B cell (primary cell): ENCODE measurements at regions of chr14 and their contacts with region 1.

Region 1: DNA sequence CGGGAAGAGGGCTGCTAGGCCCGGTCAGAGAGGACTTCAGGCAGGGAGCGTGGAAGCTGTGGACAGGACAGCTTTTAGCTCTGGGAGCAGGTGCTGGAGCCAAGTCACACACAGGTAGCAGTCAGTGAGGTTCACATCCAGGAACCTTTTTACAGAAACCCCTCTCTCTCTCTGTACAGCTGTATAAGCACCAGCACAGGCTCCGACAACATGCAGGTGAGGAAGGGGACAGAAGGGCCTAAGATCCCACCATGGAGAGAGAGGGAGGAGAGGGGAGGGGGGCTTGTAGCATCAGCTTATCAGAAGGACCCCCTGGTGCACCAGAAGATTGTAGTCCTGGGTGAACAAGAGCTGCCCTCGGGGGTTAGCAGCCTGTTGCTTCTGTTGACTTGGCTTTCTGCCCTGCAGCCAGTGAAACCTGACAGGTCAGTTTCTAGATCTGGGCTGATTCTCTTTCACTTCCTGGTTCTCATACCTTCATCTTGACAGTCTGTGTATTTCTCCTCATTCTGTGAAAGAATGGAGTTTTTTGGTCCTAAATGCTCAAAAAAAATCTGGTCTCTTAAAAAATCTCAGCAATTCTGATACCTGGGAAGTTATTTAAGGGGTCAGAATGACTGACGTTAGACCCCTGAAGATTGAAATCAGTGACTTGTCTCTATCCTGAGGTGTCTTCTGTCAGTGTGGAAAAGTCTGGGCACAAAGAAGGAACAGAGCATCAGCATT is 23.6 kb downstream of the TTC9 start:
- DNase-seq: peak; percentile 75
- ATAC-seq: peak; percentile 61
- H3K4me3 ChIP-seq: peak overlapping the region in 3 of 5 experiments; percentile 13 to 41 (median 16)
- H3K4me3 Mint-ChIP-seq: peak overlapping the region; percentile 65
- H3K27ac ChIP-seq: peak overlapping the region; percentile 79 to 89
- H3K27ac Mint-ChIP-seq: peak overlapping the region; percentile 89
- H3K4me1 ChIP-seq: peaks cover 94 to 100% of the 10 kb centered on the region in 2 donors
- H3K4me1 Mint-ChIP-seq: peaks cover 97% of the 10 kb centered on the region
- H3K27me3 ChIP-seq: no peaks in the 10 kb centered on the region
- H3K27me3 Mint-ChIP-seq: no peaks in the 10 kb centered on the region
- CTCF ChIP-seq: no peak

Region 2: DNA sequence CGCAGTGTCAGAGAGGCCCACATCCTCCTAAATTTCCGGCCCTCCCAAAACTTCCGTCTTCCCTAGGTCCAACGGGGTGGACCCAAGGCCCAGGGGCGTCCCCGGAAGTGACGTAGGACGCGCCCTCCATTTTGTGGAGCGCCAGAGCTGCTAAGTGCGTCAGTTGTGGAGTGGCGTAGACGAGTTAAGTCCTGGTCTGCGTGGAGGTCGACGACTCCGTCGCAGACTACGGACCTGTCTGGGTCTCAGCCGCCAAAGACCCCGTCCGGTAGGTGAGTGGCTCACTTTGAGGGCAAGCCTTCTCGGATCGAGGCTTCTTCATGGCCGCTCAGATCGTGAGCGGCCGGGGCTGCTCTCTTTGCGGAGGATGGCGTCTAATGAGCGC is 898.4 kb before region 1 on chr14 and contains the start of gene SRSF5:
- CTCF ChIA-PET with region 1: no interaction called
- POLR2A ChIA-PET with region 1: no interaction called
- intact Hi-C with region 1: loop called (anchors 5 kb)
- DNase-seq: peak; percentile 98
- ATAC-seq: peak; percentile 80
- H3K4me3 ChIP-seq: peak within 1 kb of the TSS; percentile 97 to 100 (median 99)
- H3K4me3 Mint-ChIP-seq: peak within 1 kb of the TSS; percentile 98
- H3K27ac ChIP-seq: peak within 1 kb of the TSS; percentile 99 to 100
- H3K27ac Mint-ChIP-seq: peak within 1 kb of the TSS; percentile 100
- H3K4me1 ChIP-seq: peaks cover 26 to 27% of the 10 kb centered on the region in 2 donors
- H3K4me1 Mint-ChIP-seq: peaks cover 43% of the 10 kb centered on the region
- H3K27me3 ChIP-seq: no peaks in the 10 kb centered on the region
- H3K27me3 Mint-ChIP-seq: no peaks in the 10 kb centered on the region
- CTCF ChIP-seq: no peak
- total RNA-seq, gene SRSF5: 708 and 768 TPM in 2 replicates

Region 3: DNA sequence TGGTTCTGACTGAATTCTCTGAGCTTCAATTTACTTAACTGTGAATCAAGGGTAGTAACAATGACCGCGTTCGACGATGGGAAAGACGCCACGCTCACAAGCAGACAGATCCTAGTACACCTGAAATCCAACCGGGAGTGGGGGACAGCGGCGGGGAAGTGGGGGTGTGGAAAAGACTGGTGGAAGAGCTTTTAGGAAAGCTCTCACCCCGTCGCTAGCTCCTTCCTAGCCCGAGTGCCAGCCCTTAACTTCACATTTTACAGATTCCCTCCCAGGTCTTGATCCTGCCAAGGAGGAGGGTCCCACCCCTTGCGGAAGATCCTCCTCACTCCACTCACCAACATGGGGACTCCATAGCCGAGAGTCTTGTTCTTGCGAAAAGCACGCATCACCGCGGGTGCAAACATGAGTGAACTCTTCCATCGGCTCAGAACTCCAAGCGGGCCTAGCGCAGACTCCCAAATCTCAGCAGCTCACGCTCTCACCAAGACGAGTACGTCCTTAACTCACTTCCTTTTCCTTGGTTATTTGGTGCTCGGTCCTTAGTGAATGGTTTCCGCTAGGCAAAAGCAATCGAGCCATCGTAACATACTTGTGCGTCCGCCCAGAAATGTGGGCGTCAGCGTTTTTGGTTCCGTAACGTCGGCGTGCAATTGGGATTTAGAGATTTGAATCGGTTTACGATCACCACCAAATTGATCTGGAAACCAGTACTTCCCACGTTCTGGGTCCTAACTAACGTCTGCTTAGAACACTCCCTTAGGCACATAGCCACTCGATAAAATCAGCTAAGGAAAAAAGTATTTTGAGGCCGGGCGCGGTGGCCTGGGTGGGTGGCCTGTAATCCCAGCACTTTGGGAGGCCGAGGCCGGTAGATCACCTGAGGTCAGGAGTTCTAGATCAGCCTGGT is 305.9 kb before region 1 on chr14 and contains the start of gene COX16:
- CTCF ChIA-PET with region 1: no interaction called
- POLR2A ChIA-PET with region 1: no interaction called
- intact Hi-C with region 1: loop called (anchors 5 kb)
- DNase-seq: peak; percentile 92
- ATAC-seq: peak; percentile 94
- H3K4me3 ChIP-seq: peak within 1 kb of the TSS; percentile 83 to 98 (median 92)
- H3K4me3 Mint-ChIP-seq: peak within 1 kb of the TSS; percentile 100
- H3K27ac ChIP-seq: peak within 1 kb of the TSS; percentile 62 to 79
- H3K27ac Mint-ChIP-seq: peak within 1 kb of the TSS; percentile 97
- H3K4me1 ChIP-seq: peaks cover 11 to 15% of the 10 kb centered on the region in 2 donors
- H3K4me1 Mint-ChIP-seq: peaks cover 41% of the 10 kb centered on the region
- H3K27me3 ChIP-seq: peaks cover 0 to 3% (median 0%) of the 10 kb centered on the region in 4 experiments
- H3K27me3 Mint-ChIP-seq: peaks cover 10% of the 10 kb centered on the region
- CTCF ChIP-seq: no peak
- total RNA-seq, gene COX16: 24.6 and 31.2 TPM in 2 replicates

Region 4: DNA sequence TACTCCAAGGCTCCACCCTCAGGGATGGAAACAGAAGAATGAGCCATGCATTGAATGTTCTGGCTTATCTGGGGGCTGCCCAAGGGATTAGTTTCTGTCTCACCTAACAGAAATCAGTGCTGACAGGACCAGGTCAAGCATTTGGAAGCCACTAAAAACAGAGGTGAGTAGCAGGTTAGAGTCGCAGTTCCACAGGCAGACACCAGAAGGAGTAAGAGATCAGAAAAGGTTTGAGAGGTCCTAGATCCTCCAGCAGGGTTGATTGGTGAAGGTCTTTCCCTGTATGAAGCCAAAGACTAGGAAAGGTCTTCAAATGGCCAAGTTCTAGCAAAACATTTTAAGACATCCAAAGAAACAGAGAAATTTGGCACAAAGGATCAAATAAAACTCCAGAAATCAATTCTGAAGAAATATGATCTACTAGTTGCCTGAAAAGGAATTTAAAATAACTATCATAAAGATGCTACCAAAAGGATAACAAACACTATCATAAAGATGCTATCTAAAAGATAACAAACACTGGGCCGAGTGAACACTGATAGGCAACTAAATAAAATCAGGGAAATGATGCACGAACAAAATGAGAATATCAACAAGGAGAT is 43.1 kb before region 1 on chr14:
- CTCF ChIA-PET with region 1: interaction called, 16 read pairs
- POLR2A ChIA-PET with region 1: no interaction called
- intact Hi-C with region 1: loop called (anchors 2 kb)
- DNase-seq: peak; percentile 73
- ATAC-seq: peak; percentile 82
- H3K4me3 ChIP-seq: no peak overlapping the region
- H3K4me3 Mint-ChIP-seq: no peak overlapping the region
- H3K27ac ChIP-seq: no peak overlapping the region
- H3K27ac Mint-ChIP-seq: no peak overlapping the region
- H3K4me1 ChIP-seq: peaks cover 7 to 10% of the 10 kb centered on the region in 2 donors
- H3K4me1 Mint-ChIP-seq: peaks cover 22% of the 10 kb centered on the region
- H3K27me3 ChIP-seq: no peaks in the 10 kb centered on the region
- H3K27me3 Mint-ChIP-seq: no peaks in the 10 kb centered on the region
- CTCF ChIP-seq: peak; percentile 85

Region 5: DNA sequence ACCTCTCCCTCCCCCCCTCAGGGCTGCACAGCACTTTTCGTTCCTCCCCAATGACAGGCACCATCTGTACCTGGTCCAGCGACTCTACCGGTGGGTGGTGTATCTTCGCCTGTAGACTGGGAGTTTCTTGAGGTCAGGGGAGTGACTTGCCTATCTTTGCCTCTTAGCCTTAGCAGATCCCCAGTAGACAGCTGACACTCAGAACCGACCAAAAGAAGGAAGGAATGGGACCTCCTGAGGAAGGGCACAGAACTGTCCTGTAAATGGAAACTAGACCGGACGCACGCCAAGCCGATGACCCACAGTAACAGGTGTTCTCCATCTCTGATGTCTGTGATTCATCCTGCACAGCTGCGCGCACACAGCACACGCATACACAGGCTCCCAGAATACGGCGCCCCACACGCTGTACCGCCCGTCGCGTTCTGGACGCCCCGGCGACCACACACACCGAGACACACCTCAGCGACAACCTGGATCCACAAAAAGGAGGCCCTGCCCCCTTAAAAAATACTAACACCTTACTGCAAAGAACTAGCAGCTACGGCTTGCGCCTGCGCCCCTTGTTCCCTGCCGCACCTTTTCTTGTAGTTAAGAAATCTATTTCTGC is 24.3 kb before region 1 on chr14:
- CTCF ChIA-PET with region 1: interaction called, 64 read pairs
- POLR2A ChIA-PET with region 1: interaction called, 16 read pairs
- intact Hi-C with region 1: loop called (anchors 1 kb)
- DNase-seq: peak; percentile 77
- ATAC-seq: peak; percentile 60
- H3K4me3 ChIP-seq: peak overlapping the region; percentile 43 to 89 (median 85)
- H3K4me3 Mint-ChIP-seq: peak overlapping the region; percentile 100
- H3K27ac ChIP-seq: peak overlapping the region; percentile 53 to 57
- H3K27ac Mint-ChIP-seq: peak overlapping the region; percentile 99
- H3K4me1 ChIP-seq: peaks cover 55 to 59% of the 10 kb centered on the region in 2 donors
- H3K4me1 Mint-ChIP-seq: peaks cover 70% of the 10 kb centered on the region
- H3K27me3 ChIP-seq: no peaks in the 10 kb centered on the region
- H3K27me3 Mint-ChIP-seq: no peaks in the 10 kb centered on the region
- CTCF ChIP-seq: no peak

Region 6: GRCh38 chr14:70655110-70655826 is 10.1 kb before region 1 on chr14:
- CTCF ChIA-PET with region 1: interaction called, 15 read pairs
- POLR2A ChIA-PET with region 1: interaction called, 13 read pairs
- intact Hi-C with region 1: loop called (anchors 1 kb)
- DNase-seq: peak; percentile 88
- ATAC-seq: peak; percentile 83
- H3K4me3 ChIP-seq: peak overlapping the region; percentile 6 to 53 (median 21)
- H3K4me3 Mint-ChIP-seq: peak overlapping the region; percentile 91
- H3K27ac ChIP-seq: peak overlapping the region; percentile 91 to 93
- H3K27ac Mint-ChIP-seq: peak overlapping the region; percentile 98
- H3K4me1 ChIP-seq: peaks cover 82 to 85% of the 10 kb centered on the region in 2 donors
- H3K4me1 Mint-ChIP-seq: peaks cover 83% of the 10 kb centered on the region
- H3K27me3 ChIP-seq: no peaks in the 10 kb centered on the region
- H3K27me3 Mint-ChIP-seq: no peaks in the 10 kb centered on the region
- CTCF ChIP-seq: no peak

Region 7: DNA sequence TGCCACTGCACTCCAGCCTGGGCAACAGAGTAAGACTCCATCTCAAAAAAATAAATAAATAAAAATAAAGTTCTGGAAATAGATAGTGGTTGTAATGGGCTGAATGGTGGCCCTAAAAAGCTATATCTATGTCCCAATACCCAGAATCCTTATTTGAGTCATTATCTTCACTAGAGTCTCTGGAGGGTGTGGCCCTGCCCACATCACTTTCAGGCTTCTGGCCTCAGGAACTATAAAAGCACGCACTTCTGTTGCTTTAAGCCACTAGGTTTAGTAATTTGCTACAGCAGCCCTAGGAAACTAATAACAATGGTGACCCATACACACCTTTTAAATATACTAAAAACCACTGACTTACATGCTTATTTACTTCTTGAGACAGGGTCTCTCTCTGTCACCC is 94.0 kb after region 1 on chr14:
- CTCF ChIA-PET with region 1: no interaction called
- POLR2A ChIA-PET with region 1: no interaction called
- intact Hi-C with region 1: no loop called
- DNase-seq: no peak
- ATAC-seq: no peak
- H3K4me3 ChIP-seq: no peak overlapping the region
- H3K4me3 Mint-ChIP-seq: no peak overlapping the region
- H3K27ac ChIP-seq: no peak overlapping the region
- H3K27ac Mint-ChIP-seq: no peak overlapping the region
- H3K4me1 ChIP-seq: no peaks in the 10 kb centered on the region
- H3K4me1 Mint-ChIP-seq: no peaks in the 10 kb centered on the region
- H3K27me3 ChIP-seq: no peaks in the 10 kb centered on the region
- H3K27me3 Mint-ChIP-seq: no peaks in the 10 kb centered on the region
- CTCF ChIP-seq: no peak

Region 8: DNA sequence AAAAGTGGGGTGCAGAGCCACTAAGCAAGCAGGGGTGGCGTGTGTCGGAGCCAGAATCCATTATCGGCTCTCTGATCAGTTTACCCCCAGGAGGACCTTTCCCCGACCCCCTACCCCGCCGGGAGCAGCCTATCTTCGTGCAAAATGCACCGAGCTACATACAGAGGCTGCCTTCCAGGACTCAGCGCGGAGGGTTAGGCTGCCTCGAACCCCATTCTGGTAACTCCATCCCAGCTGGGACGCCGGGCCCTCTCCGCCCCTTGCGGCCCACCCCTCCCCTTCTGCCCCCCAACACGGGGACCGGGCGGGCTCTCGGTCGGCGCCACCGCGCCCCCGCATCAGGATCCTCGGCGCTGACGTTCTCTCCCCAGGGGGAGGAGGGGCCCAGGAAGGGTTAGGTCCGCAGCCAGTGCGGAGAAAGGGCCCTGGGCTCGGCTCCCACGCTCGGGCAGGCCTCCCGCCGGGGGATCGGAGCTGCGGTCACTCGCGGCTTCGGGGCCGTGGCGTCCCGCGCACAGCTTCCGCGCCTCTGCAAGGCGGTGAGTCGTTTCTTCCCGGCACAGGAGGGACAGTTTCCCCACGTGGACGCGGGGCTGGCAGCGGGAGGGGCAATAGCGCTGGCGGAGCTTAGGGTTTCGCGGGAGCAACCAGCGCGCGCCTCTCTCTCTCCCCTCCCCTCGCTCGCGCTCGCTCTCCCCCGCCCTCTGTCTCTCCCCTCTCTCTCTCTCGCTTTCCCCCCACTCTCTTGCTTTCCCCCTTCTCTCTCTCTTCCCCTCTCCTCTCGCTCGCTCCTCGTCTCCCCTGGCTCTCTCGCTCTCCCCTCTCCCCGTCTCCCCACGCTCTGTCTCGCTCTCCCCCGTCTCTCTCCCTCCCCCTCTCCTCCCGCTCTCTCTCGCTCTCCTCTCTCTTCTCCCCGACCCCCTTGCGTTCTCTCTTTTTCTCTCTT is 156.5 kb after region 1 on chr14:
- CTCF ChIA-PET with region 1: interaction called, 5 read pairs
- POLR2A ChIA-PET with region 1: interaction called, 3 read pairs
- intact Hi-C with region 1: loop called (anchors 1 kb)
- DNase-seq: peak; percentile 58
- ATAC-seq: peak; percentile 7
- H3K4me3 ChIP-seq: peak overlapping the region; percentile 52 to 72 (median 61)
- H3K4me3 Mint-ChIP-seq: peak overlapping the region; percentile 79
- H3K27ac ChIP-seq: peak overlapping the region in 1 of 2 donors; percentile 19
- H3K27ac Mint-ChIP-seq: no peak overlapping the region
- H3K4me1 ChIP-seq: peaks cover 22 to 26% of the 10 kb centered on the region in 2 donors
- H3K4me1 Mint-ChIP-seq: peaks cover 18% of the 10 kb centered on the region
- H3K27me3 ChIP-seq: peaks cover 0 to 49% (median 30%) of the 10 kb centered on the region in 4 experiments
- H3K27me3 Mint-ChIP-seq: peaks cover 42% of the 10 kb centered on the region
- CTCF ChIP-seq: no peak

Region 9: GRCh38 chr14:70935135-70935534 is 269.8 kb after region 1 on chr14:
- CTCF ChIA-PET with region 1: no interaction called
- POLR2A ChIA-PET with region 1: no interaction called
- intact Hi-C with region 1: no loop called
- DNase-seq: no peak
- ATAC-seq: no peak
- H3K4me3 ChIP-seq: no peak overlapping the region
- H3K4me3 Mint-ChIP-seq: no peak overlapping the region
- H3K27ac ChIP-seq: peak overlapping the region in 1 of 2 donors; percentile 55
- H3K27ac Mint-ChIP-seq: no peak overlapping the region
- H3K4me1 ChIP-seq: peaks cover 10 to 11% of the 10 kb centered on the region in 2 donors
- H3K4me1 Mint-ChIP-seq: peaks cover 55% of the 10 kb centered on the region
- H3K27me3 ChIP-seq: no peaks in the 10 kb centered on the region
- H3K27me3 Mint-ChIP-seq: no peaks in the 10 kb centered on the region
- CTCF ChIP-seq: no peak

Region 10: GRCh38 chr14:70988452-70988851 is 323.1 kb after region 1 on chr14:
- CTCF ChIA-PET with region 1: no interaction called
- POLR2A ChIA-PET with region 1: no interaction called
- intact Hi-C with region 1: no loop called
- DNase-seq: no peak
- ATAC-seq: no peak
- H3K4me3 ChIP-seq: no peak overlapping the region
- H3K4me3 Mint-ChIP-seq: no peak overlapping the region
- H3K27ac ChIP-seq: no peak overlapping the region
- H3K27ac Mint-ChIP-seq: no peak overlapping the region
- H3K4me1 ChIP-seq: no peaks in the 10 kb centered on the region
- H3K4me1 Mint-ChIP-seq: peaks cover 2% of the 10 kb centered on the region
- H3K27me3 ChIP-seq: no peaks in the 10 kb centered on the region
- H3K27me3 Mint-ChIP-seq: no peaks in the 10 kb centered on the region
- CTCF ChIP-seq: no peak